ENCODE measurements at regions of chr20 and their contacts with region 1.

Region 1: DNA sequence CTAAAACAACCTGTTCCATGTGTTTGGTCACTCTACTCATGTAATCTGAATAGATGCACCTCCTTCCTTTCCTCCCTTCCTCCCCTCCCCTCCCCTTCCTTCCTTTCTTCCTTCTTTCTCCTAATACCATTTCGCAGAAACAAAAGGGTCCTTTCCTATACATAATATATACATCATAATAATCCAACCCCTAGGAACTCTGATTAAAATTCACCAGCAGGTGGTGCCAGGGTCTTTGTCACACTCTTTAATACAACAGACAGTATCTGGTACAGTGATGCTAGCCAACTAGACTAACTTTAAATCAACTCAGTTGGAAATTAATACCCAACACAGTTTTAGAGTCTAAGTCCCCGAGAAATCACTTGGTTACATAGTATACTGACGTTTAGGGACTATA is 181.2 kb upstream of the SHLD1 start:
- DNase-seq: no peak
- H3K4me3 ChIP-seq: no peak overlapping the region
- H3K4me3 Mint-ChIP-seq: no peak overlapping the region
- H3K27ac ChIP-seq: peak overlapping the region in 1 of 2 donors; percentile 85
- H3K27ac Mint-ChIP-seq: peak overlapping the region in 4 of 7 donors; percentile 53 to 88 (median 78)
- H3K4me1 ChIP-seq: peaks cover 27 to 29% of the 10 kb centered on the region in 2 donors
- H3K4me1 Mint-ChIP-seq: peaks cover 29% of the 10 kb centered on the region
- H3K27me3 ChIP-seq: no peaks in the 10 kb centered on the region
- H3K27me3 Mint-ChIP-seq: no peaks in the 10 kb centered on the region
- CTCF ChIP-seq: no peak

Region 2: DNA sequence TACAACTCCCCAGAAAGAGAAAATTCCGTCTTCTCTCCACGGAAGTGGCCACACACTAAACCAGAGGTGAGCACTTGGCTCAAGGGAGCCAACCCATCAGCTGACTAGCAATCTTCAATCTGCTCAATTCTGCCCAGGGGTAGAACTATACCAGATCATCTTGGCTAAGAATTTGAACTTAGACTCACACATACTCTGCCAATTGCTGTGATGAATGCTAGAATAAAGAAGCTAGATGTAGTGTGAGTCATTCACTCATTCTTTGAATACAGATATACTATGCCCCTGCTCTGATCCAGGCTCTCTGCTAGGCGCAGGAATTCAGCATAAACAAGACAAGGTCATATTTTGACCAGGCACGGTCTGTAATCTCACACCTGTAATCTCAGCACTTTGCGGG is 33.3 kb after region 1 on chr20:
- intact Hi-C with region 1: loop called (anchors 5 kb)
- DNase-seq: no peak
- H3K4me3 ChIP-seq: no peak overlapping the region
- H3K4me3 Mint-ChIP-seq: no peak overlapping the region
- H3K27ac ChIP-seq: peak overlapping the region in 1 of 2 donors; percentile 43
- H3K27ac Mint-ChIP-seq: peak overlapping the region in 6 of 7 donors; percentile 67 to 88 (median 76)
- H3K4me1 ChIP-seq: peaks cover 47 to 58% of the 10 kb centered on the region in 2 donors
- H3K4me1 Mint-ChIP-seq: peaks cover 60% of the 10 kb centered on the region
- H3K27me3 ChIP-seq: no peaks in the 10 kb centered on the region
- H3K27me3 Mint-ChIP-seq: no peaks in the 10 kb centered on the region
- CTCF ChIP-seq: no peak

Region 3: DNA sequence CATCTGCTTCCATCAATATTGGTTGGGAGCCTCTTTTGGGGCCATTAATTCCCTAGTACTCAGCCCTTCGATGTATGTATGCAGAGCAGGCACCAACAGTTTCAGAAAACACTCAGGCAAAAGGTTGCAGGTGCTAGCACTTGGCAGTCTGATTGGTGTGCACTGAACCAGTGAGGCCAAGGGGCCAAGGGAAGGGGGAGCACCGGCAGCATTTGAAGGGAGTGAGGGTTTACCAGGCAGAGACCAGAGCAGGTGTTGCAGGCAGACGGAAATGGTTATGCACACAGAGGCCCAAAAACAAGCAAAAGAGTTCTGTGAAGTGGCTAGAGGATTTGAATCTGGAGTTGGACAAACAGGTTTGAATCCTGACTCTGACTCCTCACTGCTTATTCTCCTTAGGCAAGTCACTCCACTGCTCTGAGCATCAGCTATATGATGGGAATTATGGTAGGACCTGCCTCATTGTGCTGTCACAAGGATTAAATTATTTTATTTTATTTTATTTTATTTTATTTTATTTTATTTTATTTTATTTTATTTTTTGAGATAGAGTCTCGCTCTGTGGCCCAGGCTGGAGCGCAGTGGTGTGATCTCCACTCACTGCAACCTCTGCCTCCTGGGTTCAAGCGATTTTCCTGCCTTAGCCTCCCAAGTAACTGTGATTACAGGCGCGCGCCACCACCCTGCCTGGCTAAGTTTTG is 123.0 kb after region 1 on chr20:
- intact Hi-C with region 1: no loop called
- DNase-seq: no peak
- H3K4me3 ChIP-seq: no peak overlapping the region
- H3K4me3 Mint-ChIP-seq: no peak overlapping the region
- H3K27ac ChIP-seq: no peak overlapping the region
- H3K27ac Mint-ChIP-seq: peak overlapping the region in 1 of 7 donors; percentile 13
- H3K4me1 ChIP-seq: peaks cover 36% of the 10 kb centered on the region in 2 donors
- H3K4me1 Mint-ChIP-seq: peaks cover 34% of the 10 kb centered on the region
- H3K27me3 ChIP-seq: no peaks in the 10 kb centered on the region
- H3K27me3 Mint-ChIP-seq: peaks cover 0 to 10% (median 0%) of the 10 kb centered on the region in 3 donors
- CTCF ChIP-seq: no peak